WTC11 (cell line): ENCODE measurements at regions of chrX and their contacts with region 1.

Region 1: GRCh38 chrX:77910108-77910840 is at the start of gene ATP7A:
- DNase-seq: peak; percentile 78
- ATAC-seq: peak; percentile 94
- H3K4me3 Mint-ChIP-seq: peak within 1 kb of the TSS; percentile 94
- H3K27ac Mint-ChIP-seq: peak within 1 kb of the TSS; percentile 96
- H3K4me1 Mint-ChIP-seq: peaks cover 5% of the 10 kb centered on the region; the same call in 1 of the 2 replicates
- H3K27me3 Mint-ChIP-seq: no peaks in the 10 kb centered on the region
- CTCF ChIP-seq: no peak
- total RNA-seq, gene ATP7A: 2.7 to 3.4 TPM (median 2.8 TPM) in 3 replicates

Region 2: DNA sequence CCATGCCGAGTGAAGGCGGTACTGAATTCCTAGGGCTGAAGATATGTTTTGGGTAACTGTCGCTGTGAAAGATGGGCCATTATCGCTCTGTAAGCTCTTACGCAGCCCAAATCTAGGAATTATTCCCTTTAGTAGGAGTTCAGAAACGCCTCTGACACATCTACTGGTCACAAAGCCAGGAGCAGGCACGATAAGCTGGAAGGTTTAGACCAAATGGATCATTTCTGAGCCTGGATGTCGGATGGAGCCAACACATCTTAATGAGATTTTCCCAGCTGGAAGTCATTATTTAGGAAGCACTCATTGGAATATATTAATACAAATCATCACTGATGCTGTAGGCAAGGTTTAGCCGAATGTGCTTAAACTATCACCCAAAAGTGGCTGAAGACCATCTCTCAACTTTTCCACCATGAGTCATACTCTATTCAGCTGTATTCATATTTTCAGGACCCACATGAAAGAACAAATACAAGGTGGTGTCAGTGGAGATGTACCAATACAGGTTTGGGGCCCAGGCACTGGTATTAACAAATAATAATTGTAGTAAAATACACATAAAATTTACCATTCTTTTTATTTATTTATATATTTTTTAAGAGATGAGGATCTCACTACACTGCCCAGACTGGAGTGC is 90.1 kb before region 1 on chrX:
- CTCF ChIA-PET with region 1: no interaction called
- POLR2A ChIA-PET with region 1: no interaction called
- DNase-seq: no peak
- ATAC-seq: no peak
- H3K4me3 Mint-ChIP-seq: no peak overlapping the region
- H3K27ac Mint-ChIP-seq: no peak overlapping the region
- H3K4me1 Mint-ChIP-seq: no peaks in the 10 kb centered on the region
- H3K27me3 Mint-ChIP-seq: no peaks in the 10 kb centered on the region
- CTCF ChIP-seq: no peak

Region 3: DNA sequence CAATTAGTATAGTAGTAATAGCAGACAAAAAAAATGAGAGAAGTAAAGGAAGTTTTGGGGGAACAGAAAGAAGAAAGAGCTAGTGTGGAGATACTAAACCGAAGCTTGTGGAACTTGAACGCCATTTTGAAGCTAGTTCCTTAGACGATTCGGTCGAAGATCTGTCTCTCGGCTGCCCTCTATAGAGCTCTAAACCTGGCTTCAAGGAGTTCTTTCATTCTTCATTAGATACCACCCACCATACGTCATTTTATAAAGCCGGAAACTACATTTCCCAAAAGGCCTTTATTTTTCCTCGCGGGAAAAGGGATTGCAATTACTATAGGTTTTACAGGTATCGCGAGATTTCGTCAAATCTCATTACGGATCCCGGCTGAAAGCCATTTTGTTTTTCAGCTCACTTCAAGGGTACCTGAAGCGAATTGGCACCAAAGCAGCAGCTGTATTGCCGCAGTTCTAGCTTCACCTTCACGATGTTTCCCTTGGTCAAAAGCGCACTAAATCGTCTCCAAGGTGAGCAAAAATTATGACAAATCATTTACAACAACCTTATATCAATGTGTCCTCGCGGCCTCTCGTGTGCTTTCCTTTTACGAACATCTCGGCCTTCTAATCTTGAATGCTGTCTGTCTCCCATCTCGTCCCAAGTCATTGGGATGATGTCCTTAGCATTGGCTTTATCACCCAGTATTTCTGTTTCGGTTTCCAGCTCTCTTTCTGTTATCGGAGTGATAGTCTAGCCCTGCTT is 11.0 kb before region 1 on chrX and contains the start of gene COX7B:
- CTCF ChIA-PET with region 1: interaction called, 5 read pairs
- POLR2A ChIA-PET with region 1: interaction called, 13 read pairs
- DNase-seq: peak; percentile 46
- ATAC-seq: peak; percentile 73
- H3K4me3 Mint-ChIP-seq: peak within 1 kb of the TSS; percentile 98
- H3K27ac Mint-ChIP-seq: peak within 1 kb of the TSS; percentile 99
- H3K4me1 Mint-ChIP-seq: peaks cover 7% of the 10 kb centered on the region
- H3K27me3 Mint-ChIP-seq: no peaks in the 10 kb centered on the region
- CTCF ChIP-seq: no peak
- total RNA-seq, gene COX7B: 280 to 285 TPM (median 281 TPM) in 3 replicates